Endothelial cell of umbilical vein (primary cell): ENCODE measurements at regions of chr13 and their contacts with region 1.

Region 1: DNA sequence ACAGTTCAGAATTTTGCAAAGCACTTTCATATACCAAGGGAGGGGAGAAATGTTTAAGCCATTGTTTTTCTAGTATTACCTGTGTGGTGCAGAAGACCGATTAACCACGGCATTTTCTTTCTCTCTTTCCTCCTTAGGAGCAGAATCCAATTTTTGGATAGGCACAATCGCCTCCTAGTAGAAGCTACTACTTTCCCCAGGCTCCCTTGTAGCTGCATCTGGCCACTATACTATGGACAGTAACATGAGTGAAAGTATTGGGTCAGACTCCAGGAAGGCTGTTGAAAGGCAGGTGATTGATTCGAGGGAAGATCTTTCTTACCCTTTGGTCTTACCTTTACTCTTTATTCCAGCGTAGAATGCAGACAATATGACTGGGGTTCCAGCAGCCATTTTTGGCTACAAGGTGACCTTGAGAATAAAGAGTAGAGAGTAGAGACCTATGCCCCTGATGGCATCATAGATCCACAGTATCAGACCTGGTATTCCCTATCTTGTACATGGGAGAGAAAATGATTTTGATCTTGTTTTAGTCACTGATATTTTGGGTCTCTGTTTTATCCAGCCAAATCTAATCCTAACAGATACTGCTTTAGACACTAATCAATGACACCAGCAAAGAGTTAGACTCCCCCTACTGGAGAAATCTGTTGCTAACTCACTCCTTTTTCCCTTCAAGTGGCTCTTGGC is 77.0 kb downstream of the LRRC63 start:
- DNase-seq: peak; percentile 50
- H3K4me3 ChIP-seq: no peak overlapping the region
- H3K27ac ChIP-seq: no peak overlapping the region
- H3K4me1 ChIP-seq: no peaks in the 10 kb centered on the region
- H3K27me3 ChIP-seq: no peaks in the 10 kb centered on the region
- CTCF ChIP-seq: peak; percentile 55 to 73
- POLR2A ChIP-seq: no peak

Region 2: GRCh38 chr13:46274094-46274698 is 14.5 kb before region 1 on chr13:
- CTCF ChIA-PET with region 1: interaction called, 12 read pairs
- POLR2A ChIA-PET with region 1: no interaction called
- dilution Hi-C with region 1: no loop called
- intact Hi-C with region 1: no loop called
- DNase-seq: no peak
- H3K4me3 ChIP-seq: no peak overlapping the region
- H3K27ac ChIP-seq: no peak overlapping the region
- H3K4me1 ChIP-seq: no peaks in the 10 kb centered on the region
- H3K27me3 ChIP-seq: peaks cover 0 to 9% of the 10 kb centered on the region in 2 experiments
- CTCF ChIP-seq: no peak
- POLR2A ChIP-seq: no peak

Region 3: DNA sequence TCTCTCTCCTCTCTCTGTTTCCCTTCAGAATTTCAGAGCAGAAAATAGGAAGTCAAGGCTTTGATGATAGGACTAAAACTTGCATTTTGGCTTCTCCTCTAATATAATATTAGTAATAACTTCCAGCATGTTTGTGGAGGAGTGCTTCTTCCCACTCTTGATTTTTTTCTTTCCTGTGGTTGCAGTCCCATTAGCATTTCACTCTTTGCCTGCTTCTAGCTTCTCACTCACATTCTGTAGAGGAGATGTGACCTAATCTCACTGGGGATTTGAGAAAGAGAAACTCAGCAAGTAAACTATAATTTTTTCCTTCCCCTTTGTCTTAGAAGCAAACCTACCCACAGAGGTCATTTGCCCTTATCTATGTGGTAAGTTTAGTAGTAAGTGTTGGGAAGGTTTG is 777.5 kb after region 1 on chr13:
- CTCF ChIA-PET with region 1: no interaction called
- POLR2A ChIA-PET with region 1: no interaction called
- dilution Hi-C with region 1: no loop called
- intact Hi-C with region 1: no loop called
- DNase-seq: no peak
- H3K4me3 ChIP-seq: no peak overlapping the region
- H3K27ac ChIP-seq: no peak overlapping the region
- H3K4me1 ChIP-seq: no peaks in the 10 kb centered on the region
- H3K27me3 ChIP-seq: no peaks in the 10 kb centered on the region
- CTCF ChIP-seq: no peak
- POLR2A ChIP-seq: no peak